H1 (cell line): ENCODE measurements at regions of chr6 and their contacts with region 1.

Region 1: DNA sequence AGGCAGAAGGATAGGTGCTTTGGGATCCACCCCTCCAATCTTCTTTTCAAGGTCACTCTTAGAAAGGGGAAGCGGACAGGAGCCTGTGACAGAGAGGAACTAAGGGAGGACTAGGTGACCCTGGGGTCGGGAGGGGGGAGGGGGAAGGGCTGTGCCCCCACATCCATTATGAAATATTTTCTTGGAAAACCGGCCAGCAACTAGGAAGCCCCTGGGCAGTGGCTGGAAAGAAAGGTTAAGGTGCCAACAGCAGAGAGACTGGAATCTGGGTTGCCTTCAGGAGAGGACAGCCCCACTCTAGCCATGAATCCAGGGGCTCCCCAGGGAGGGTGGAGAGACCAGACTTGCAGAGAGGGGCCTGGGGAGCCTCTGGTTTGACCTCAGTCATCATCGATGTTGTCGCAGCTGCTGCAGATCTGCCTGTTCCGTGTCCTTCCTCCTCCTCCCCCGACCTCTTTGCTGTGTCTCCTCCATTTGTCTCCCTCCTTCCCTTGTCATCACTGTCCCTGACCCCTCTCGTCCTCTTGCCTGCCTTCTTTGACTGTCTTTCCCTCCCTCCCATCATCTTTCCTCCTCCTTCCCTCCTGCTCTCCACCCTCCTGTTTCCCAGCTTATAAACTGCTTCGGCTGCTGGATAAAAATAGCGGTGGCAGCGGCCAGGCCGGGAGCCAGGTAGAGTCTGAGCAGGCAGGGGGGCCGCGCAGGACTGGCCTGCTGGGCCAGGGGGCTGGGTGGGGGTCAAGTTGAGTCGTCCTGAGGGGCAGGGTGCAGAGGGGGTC is 3.2 kb downstream of the SLC29A1 start:
- DNase-seq: no peak
- H3K4me3 ChIP-seq: peak overlapping the region in 1 of 4 experiments; percentile 29; a peak in 1 of 8 replicates
- H3K27ac ChIP-seq: no peak overlapping the region; the same call in 1 of the 2 replicates
- H3K4me1 ChIP-seq: peaks cover 15 to 40% (median 32%) of the 10 kb centered on the region in 4 experiments
- H3K27me3 ChIP-seq: no peaks in the 10 kb centered on the region
- CTCF ChIP-seq: no peak
- EP300 ChIP-seq: no peak
- POLR2A ChIP-seq: no peak
- RAD21 ChIP-seq: no peak

Region 2: DNA sequence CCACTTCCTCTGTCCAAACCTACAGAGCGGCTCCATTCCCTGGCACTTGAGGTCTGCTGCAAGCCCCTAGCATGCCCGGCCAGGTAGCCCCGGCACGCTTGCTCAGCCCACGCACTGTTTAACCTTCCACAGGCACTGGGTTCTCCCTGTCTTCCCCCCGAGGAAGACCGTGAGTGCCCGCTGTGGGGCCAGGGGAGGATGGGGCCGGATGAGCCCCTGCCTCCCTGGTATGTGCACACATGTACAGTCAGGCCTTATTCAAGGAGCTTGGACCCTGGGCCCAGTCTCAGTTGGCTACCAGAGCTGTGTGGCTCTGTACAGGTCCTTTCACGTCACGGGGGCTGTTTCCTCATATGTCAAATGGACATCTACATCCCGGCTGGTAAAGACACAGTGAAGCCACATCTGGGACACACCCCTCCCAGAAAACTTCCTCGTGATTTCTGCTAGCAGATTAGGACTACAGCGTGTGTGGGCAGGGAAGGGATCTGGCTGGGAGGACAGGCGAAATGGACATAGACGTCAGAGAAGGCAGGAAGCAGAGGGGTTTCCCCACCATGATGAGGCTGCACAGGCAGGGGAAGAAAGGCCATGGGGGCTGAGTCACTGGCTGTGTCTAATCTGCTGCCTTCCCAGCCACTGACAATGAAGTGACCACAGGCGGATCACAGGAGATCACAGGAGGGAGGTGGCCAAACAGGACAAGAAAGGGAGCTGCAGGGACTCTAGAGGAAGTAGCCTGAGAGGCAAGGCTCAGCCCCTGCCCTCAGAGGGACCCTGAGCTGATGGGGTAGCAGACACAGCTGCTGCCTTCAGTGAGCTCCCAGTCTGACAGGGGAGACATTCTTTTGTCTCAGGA is 162.2 kb before region 1 on chr6:
- CTCF ChIA-PET with region 1: no interaction called
- POLR2A ChIA-PET with region 1: no interaction called
- DNase-seq: no peak
- H3K4me3 ChIP-seq: no peak overlapping the region
- H3K27ac ChIP-seq: no peak overlapping the region
- H3K4me1 ChIP-seq: peaks cover 0 to 16% (median 9%) of the 10 kb centered on the region in 4 experiments; a peak in 5 of 7 replicates
- H3K27me3 ChIP-seq: no peaks in the 10 kb centered on the region; a peak in 1 of 7 replicates
- CTCF ChIP-seq: no peak
- EP300 ChIP-seq: no peak
- POLR2A ChIP-seq: no peak
- RAD21 ChIP-seq: no peak

Region 3: GRCh38 chr6:44251576-44252524 is 25.3 kb after region 1 on chr6:
- CTCF ChIA-PET with region 1: interaction called, 40 read pairs
- POLR2A ChIA-PET with region 1: interaction called, 581 read pairs
- DNase-seq: no peak
- H3K4me3 ChIP-seq: no peak overlapping the region
- H3K27ac ChIP-seq: no peak overlapping the region
- H3K4me1 ChIP-seq: peaks cover 7 to 17% (median 8%) of the 10 kb centered on the region in 4 experiments; a peak in 6 of 7 replicates
- H3K27me3 ChIP-seq: no peaks in the 10 kb centered on the region
- CTCF ChIP-seq: no peak
- EP300 ChIP-seq: no peak
- POLR2A ChIP-seq: peak; percentile 38 to 84
- RAD21 ChIP-seq: no peak

Region 4: GRCh38 chr6:44257025-44257752 is 30.6 kb after region 1 on chr6 and contains the start of gene SLC35B2:
- CTCF ChIA-PET with region 1: interaction called, 14 read pairs
- POLR2A ChIA-PET with region 1: interaction called, 581 read pairs
- DNase-seq: peak in 1 of 2 experiments; percentile 85
- H3K4me3 ChIP-seq: peak within 1 kb of the TSS; percentile 67 to 85 (median 75)
- H3K27ac ChIP-seq: peak within 1 kb of the TSS; percentile 88
- H3K4me1 ChIP-seq: peaks cover 1 to 20% (median 7%) of the 10 kb centered on the region in 4 experiments; a peak in 6 of 7 replicates
- H3K27me3 ChIP-seq: no peaks in the 10 kb centered on the region
- CTCF ChIP-seq: peak in 2 of 3 experiments; percentile 70 to 91; a peak in 3 of 4 replicates
- EP300 ChIP-seq: peak; percentile 21 to 23; a peak in 2 of 3 replicates
- POLR2A ChIP-seq: peak in 1 of 2 experiments; percentile 67; a peak in 1 of 3 replicates
- RAD21 ChIP-seq: peak; percentile 6 to 59; a peak in 3 of 4 replicates
- total RNA-seq, gene SLC35B2: 29.5 and 32.3 TPM in 2 replicates

Region 5: DNA sequence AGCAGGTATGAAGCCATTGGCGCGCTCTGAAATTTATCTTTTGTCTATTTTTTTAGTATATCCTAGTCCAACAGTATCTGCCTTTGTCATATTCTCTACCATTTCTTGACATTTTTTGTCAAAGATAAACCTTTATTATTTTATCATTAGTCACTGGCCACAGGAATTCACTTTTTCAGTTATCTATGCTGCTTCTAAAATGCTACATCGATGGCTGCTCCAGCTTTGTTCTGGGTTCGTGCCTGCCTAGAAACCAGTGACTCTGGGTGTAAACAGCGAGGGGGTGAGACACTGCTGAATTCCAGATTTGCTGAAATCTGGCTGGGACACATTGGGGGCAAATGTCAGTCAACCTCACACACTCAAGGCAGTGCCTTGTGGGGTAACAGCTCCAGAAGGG is 354.3 kb after region 1 on chr6:
- CTCF ChIA-PET with region 1: no interaction called
- POLR2A ChIA-PET with region 1: no interaction called
- DNase-seq: no peak
- H3K4me3 ChIP-seq: no peak overlapping the region
- H3K27ac ChIP-seq: no peak overlapping the region
- H3K4me1 ChIP-seq: no peaks in the 10 kb centered on the region
- H3K27me3 ChIP-seq: no peaks in the 10 kb centered on the region
- CTCF ChIP-seq: no peak
- EP300 ChIP-seq: no peak
- POLR2A ChIP-seq: no peak
- RAD21 ChIP-seq: no peak